HAP-1 (cell line): ENCODE measurements at regions of chr20 and their contacts with region 1.

Region 1: DNA sequence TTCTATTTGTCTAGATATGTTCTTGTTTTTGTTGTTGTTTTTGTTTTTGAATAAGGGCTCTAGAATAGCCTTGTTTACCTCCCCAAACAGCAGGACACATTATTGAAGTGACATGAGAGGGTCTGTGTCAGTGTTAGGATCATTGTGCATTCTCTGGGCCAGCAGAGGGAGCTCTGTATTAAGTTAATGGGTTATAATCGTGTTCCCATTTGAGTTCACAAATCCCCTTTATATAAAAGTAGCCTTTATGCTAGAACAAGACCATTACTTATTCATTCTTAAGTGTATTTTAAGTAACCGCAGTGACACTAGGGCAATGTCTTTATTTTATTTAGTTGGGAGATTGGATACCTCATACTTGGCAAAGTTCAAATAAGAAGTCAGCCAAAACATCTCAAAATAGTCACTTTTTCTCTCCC is 44.8 kb downstream of the STK4 start:
- DNase-seq: peak; percentile 70 to 73
- H3K4me3 ChIP-seq: no peak overlapping the region
- H3K4me1 ChIP-seq: peaks cover 8% of the 10 kb centered on the region; the same call in 1 of the 2 replicates
- H3K27me3 ChIP-seq: no peaks in the 10 kb centered on the region

Region 2: DNA sequence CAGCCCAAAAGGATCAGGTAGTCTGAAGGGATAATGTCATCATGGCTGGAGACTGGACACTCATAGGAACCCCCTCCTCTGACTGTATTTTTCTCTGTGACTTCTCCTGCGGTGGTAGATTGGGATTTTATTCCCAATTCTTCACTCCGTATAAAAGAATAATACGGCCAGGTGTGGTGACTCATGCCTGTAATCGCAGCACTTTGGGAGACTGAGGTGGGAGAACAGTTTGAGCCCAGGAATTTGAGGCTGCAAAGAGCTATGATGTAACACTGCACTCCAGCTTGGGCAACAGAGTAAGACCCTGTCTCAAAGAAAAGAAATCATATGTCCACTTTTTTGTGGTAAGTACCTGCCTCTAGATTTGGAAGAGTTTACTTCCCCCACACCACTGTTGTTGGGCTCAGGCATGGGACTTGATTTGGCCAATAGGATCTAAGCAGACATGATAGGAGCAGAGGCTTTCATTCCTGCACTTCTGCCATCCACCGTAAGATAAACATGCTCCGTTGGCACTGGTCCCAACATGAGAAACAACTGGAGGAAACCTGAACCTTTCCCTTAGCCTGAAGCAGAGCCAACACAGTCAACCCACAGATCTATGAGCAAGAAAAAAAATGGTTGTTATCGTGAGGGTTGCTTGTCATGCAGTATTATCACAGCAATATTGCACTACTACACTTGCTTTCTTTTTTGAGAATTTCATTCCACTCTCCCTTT is 906.2 kb before region 1 on chr20:
- in situ Hi-C with region 1: no loop called
- DNase-seq: no peak
- H3K4me3 ChIP-seq: no peak overlapping the region
- H3K4me1 ChIP-seq: no peaks in the 10 kb centered on the region
- H3K27me3 ChIP-seq: peaks cover 2% of the 10 kb centered on the region; the same call in 1 of the 2 replicates

Region 3: GRCh38 chr20:44956410-44956809 is 54.7 kb before region 1 on chr20:
- in situ Hi-C with region 1: no loop called
- DNase-seq: no peak
- H3K4me3 ChIP-seq: no peak overlapping the region
- H3K4me1 ChIP-seq: peaks cover 15% of the 10 kb centered on the region
- H3K27me3 ChIP-seq: no peaks in the 10 kb centered on the region

Region 4: DNA sequence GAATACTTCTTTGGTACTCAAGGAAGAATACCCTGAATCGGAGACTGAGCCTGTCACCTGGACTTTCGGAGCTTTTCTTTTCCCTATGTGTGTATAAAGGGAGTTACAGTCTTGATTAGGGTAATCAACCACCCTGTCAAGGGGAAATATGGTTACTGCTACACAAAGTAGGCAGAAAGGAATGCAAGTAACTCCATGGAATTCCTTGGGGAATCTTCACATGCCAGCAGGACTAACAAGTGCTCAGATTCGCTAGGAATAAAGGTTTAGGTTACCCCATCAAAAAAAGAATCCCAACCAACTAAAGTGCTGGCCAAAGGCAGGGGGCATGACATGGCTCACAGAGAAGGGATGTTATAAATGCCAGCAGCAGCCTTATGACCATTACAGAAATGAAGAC is 79.4 kb after region 1 on chr20:
- in situ Hi-C with region 1: loop called (anchors 5 kb)
- DNase-seq: no peak
- H3K4me3 ChIP-seq: no peak overlapping the region
- H3K4me1 ChIP-seq: no peaks in the 10 kb centered on the region
- H3K27me3 ChIP-seq: no peaks in the 10 kb centered on the region

Region 5: GRCh38 chr20:46709459-46710152 is 1698.5 kb after region 1 on chr20 and contains the start of gene SLC2A10:
- in situ Hi-C with region 1: no loop called
- DNase-seq: no peak
- H3K4me3 ChIP-seq: no peak within 1 kb of the TSS
- H3K4me1 ChIP-seq: no peaks in the 10 kb centered on the region; the same call in 1 of the 2 replicates
- H3K27me3 ChIP-seq: no peaks in the 10 kb centered on the region